ENCODE measurements at regions of chr1 and their contacts with region 1.

Region 1: DNA sequence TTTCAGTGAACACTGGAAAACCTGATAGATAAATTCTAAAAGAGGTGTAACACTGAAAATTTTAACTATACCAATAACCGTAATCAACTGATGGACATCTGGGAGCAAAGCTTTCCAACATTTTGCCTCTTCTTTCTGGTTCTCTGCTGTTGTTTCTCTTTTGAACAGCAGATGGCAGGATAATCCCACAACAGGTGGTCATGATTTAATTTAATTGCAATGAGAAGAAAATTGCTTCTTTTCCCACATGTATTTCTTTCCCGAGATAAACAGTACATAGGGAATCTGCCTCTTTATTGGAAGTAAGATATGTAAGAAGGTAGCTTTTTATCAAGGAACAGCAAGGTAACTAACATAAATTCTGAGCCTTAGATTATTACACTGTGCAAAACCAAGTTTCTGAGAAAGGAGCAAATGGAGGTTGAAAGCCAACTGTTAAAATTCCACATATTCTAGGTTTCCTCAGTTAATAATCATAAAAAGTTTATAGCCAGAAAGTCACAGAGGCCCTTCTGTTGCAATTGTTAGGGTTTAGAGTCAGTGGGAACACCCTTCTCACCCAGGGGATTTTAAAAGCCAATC is 72.9 kb downstream of the RPS6KA1 start:
- DNase-seq: peak; percentile 52
- ATAC-seq: no peak
- H3K4me3 ChIP-seq: no peak overlapping the region
- H3K27ac ChIP-seq: no peak overlapping the region
- H3K4me1 ChIP-seq: 0 out of 2 replicates have a peak, but pooled peaks cover 7% of the 10 kb centered on the region
- H3K27me3 ChIP-seq: peaks cover 0 to 7% of the 10 kb centered on the region in 2 experiments; a peak in 2 of 5 replicates
- CTCF ChIP-seq: peak; percentile 82
- EP300 ChIP-seq: no peak
- POLR2A ChIP-seq: no peak
- RAD21 ChIP-seq: peak; percentile 85

Region 2: GRCh38 chr1:26627954-26628353 is 25.5 kb after region 1 on chr1:
- CTCF ChIA-PET with region 1: no interaction called
- POLR2A ChIA-PET with region 1: no interaction called
- in situ Hi-C with region 1: no loop called
- intact Hi-C with region 1: no loop called
- DNase-seq: no peak
- ATAC-seq: no peak
- H3K4me3 ChIP-seq: no peak overlapping the region
- H3K27ac ChIP-seq: no peak overlapping the region
- H3K4me1 ChIP-seq: peaks cover 36% of the 10 kb centered on the region
- H3K27me3 ChIP-seq: no peaks in the 10 kb centered on the region
- CTCF ChIP-seq: no peak
- EP300 ChIP-seq: no peak
- POLR2A ChIP-seq: no peak
- RAD21 ChIP-seq: no peak

Region 3: GRCh38 chr1:26677306-26678115 is 75.0 kb after region 1 on chr1:
- CTCF ChIA-PET with region 1: interaction called, 9 read pairs
- POLR2A ChIA-PET with region 1: no interaction called
- in situ Hi-C with region 1: no loop called
- intact Hi-C with region 1: loop called (anchors 1 kb)
- DNase-seq: peak; percentile 61
- ATAC-seq: peak; percentile 99
- H3K4me3 ChIP-seq: 0 out of 6 replicates have a peak overlapping the region, but pooled peaks of 1 of the 3 experiments have one; percentile 11
- H3K27ac ChIP-seq: no peak overlapping the region
- H3K4me1 ChIP-seq: peaks cover 18% of the 10 kb centered on the region
- H3K27me3 ChIP-seq: no peaks in the 10 kb centered on the region
- CTCF ChIP-seq: peak; percentile 85
- EP300 ChIP-seq: no peak
- POLR2A ChIP-seq: no peak
- RAD21 ChIP-seq: peak; percentile 58

Region 4: DNA sequence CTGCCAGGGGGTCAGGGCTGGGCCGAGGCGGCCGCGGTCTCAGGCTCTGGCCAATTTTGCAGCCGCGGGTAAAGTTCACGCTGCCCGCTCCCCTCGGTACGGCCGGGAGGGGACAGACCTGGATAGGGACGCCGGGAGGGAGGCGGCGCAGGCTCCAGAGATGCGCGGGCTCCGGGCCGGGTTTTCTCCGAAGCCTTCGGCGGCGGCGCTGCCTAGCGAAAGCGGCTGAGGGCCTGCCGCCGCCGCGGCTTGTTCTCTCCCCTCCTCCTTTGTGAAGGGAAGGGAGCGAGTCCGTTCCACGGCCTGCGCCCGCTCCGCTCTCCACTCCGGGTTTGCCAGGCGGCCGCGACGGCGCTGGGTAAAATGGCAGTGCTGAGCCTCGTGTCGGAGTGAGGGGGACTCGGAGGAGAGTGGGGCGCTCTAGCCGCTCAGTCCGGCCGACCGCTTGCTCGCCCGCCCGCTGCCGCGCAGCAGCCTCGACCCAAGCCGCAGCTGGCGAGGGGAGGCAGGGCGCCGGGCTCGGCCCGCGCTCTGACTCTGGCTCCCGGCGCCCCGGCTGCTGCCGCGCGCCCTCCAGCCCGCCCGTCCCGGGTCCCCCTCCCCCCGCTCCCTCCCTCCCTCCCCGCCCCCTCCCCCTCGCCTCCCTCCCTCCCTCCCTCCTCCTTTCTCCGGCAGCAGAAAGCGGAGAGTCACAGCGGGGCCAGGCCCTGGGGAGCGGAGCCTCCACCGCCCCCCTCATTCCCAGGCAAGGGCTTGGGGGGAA is 93.1 kb after region 1 on chr1 and contains the start of gene ARID1A:
- CTCF ChIA-PET with region 1: interaction called, 4 read pairs
- POLR2A ChIA-PET with region 1: interaction called, 3 read pairs
- in situ Hi-C with region 1: no loop called
- intact Hi-C with region 1: loop called (anchors 5 kb)
- DNase-seq: peak; percentile 88
- ATAC-seq: peak; percentile 69
- H3K4me3 ChIP-seq: peak within 1 kb of the TSS; percentile 84 to 96 (median 91)
- H3K27ac ChIP-seq: peak within 1 kb of the TSS; percentile 98
- H3K4me1 ChIP-seq: peaks cover 60% of the 10 kb centered on the region
- H3K27me3 ChIP-seq: no peaks in the 10 kb centered on the region
- CTCF ChIP-seq: peak; percentile 44
- EP300 ChIP-seq: peak in 1 of 2 experiments; percentile 40; a peak in 1 of 4 replicates
- POLR2A ChIP-seq: peak; percentile 77 to 90
- RAD21 ChIP-seq: peak; percentile 84
- total RNA-seq, gene ARID1A: 11.9 and 18.4 TPM in 2 replicates

Region 5: DNA sequence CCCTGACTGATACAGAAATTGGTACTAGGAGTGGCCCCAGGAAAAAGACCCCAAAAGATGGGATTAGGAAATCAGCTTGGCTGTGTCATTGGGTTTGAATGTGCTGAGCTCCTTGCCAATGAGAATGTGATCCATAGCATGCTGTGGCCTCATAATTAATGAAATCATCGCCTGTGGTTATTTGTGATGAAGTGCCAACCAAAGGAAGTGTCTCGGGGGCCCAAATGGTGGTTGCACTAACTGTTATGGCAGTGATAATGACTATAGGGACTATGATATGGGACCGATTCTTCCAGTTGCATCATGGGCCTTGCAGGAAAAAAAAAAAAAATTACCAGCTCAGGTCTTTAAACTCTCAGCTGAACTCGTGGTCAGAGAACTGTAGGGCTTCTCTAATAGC is 208.6 kb after region 1 on chr1:
- CTCF ChIA-PET with region 1: interaction called, 4 read pairs
- POLR2A ChIA-PET with region 1: no interaction called
- in situ Hi-C with region 1: no loop called
- intact Hi-C with region 1: loop called (anchors 5 kb)
- DNase-seq: no peak
- ATAC-seq: no peak
- H3K4me3 ChIP-seq: no peak overlapping the region
- H3K27ac ChIP-seq: no peak overlapping the region
- H3K4me1 ChIP-seq: peaks cover 24% of the 10 kb centered on the region
- H3K27me3 ChIP-seq: no peaks in the 10 kb centered on the region
- CTCF ChIP-seq: no peak
- EP300 ChIP-seq: no peak
- POLR2A ChIP-seq: no peak
- RAD21 ChIP-seq: no peak

Region 6: GRCh38 chr1:26874896-26875295 is 272.4 kb after region 1 on chr1:
- CTCF ChIA-PET with region 1: no interaction called
- POLR2A ChIA-PET with region 1: no interaction called
- in situ Hi-C with region 1: no loop called
- intact Hi-C with region 1: loop called (anchors 10 kb)
- DNase-seq: no peak
- ATAC-seq: no peak
- H3K4me3 ChIP-seq: no peak overlapping the region
- H3K27ac ChIP-seq: no peak overlapping the region
- H3K4me1 ChIP-seq: peaks cover 9% of the 10 kb centered on the region
- H3K27me3 ChIP-seq: no peaks in the 10 kb centered on the region
- CTCF ChIP-seq: no peak
- EP300 ChIP-seq: no peak
- POLR2A ChIP-seq: no peak
- RAD21 ChIP-seq: no peak

Measured in HepG2 (cell line).